Aorta (tissue), 5 donors: ENCODE measurements at regions of chr9 and their contacts with region 1.

Region 1: DNA sequence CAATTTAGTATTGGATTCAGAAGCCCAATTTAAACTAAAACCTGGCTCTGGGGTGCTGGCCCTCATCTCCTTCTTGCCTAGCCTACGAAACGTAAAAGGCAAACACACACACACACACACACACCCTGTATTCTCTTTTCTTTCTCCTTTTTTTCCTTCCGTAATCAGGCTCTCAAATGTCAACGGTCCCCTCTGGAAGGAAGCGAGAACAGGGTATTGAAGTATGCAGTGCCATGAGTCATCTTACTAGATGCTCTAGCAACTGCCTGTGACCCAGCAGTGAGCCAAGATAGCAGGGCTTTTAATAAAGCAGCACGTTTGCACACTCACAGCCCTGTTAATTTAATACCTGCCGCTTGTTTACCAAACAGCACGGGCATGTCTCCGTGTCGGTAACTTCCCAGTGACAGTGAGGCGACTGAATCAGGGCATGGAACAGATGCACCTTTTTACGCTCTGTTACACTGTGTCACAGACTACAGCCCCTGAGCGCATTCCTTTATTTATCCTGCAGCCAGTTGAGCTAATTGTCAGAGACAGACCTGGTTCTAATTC is 243.8 kb downstream of the BNC2 start:
- DNase-seq: no peak
- ATAC-seq: peak; percentile 81
- H3K4me3 ChIP-seq: peak overlapping the region in 1 of 2 donors; percentile 47
- H3K27ac ChIP-seq: peak overlapping the region in 1 of 2 donors; percentile 50
- H3K4me1 ChIP-seq: peaks cover 0 to 2% of the 10 kb centered on the region in 2 donors
- H3K27me3 ChIP-seq: no peaks in the 10 kb centered on the region

Region 2: GRCh38 chr9:16591092-16591491 is 35.6 kb before region 1 on chr9:
- intact Hi-C with region 1: no loop called
- DNase-seq: no peak
- ATAC-seq: no peak
- H3K4me3 ChIP-seq: no peak overlapping the region
- H3K27ac ChIP-seq: no peak overlapping the region
- H3K4me1 ChIP-seq: no peaks in the 10 kb centered on the region
- H3K27me3 ChIP-seq: no peaks in the 10 kb centered on the region

Region 3: GRCh38 chr9:16705121-16705604 is 78.5 kb after region 1 on chr9:
- intact Hi-C with region 1: loop called in 1 of 2 experiments (anchors 10 kb)
- DNase-seq: peak; percentile 94 to 96
- ATAC-seq: peak; percentile 94
- H3K4me3 ChIP-seq: peak overlapping the region; percentile 16 to 78
- H3K27ac ChIP-seq: peak overlapping the region in 1 of 2 donors; percentile 92
- H3K4me1 ChIP-seq: peaks cover 0 to 2% of the 10 kb centered on the region in 2 donors
- H3K27me3 ChIP-seq: no peaks in the 10 kb centered on the region